GM18951 (cell line): ENCODE measurements at regions of chr18 and their contacts with region 1.

Region 1: DNA sequence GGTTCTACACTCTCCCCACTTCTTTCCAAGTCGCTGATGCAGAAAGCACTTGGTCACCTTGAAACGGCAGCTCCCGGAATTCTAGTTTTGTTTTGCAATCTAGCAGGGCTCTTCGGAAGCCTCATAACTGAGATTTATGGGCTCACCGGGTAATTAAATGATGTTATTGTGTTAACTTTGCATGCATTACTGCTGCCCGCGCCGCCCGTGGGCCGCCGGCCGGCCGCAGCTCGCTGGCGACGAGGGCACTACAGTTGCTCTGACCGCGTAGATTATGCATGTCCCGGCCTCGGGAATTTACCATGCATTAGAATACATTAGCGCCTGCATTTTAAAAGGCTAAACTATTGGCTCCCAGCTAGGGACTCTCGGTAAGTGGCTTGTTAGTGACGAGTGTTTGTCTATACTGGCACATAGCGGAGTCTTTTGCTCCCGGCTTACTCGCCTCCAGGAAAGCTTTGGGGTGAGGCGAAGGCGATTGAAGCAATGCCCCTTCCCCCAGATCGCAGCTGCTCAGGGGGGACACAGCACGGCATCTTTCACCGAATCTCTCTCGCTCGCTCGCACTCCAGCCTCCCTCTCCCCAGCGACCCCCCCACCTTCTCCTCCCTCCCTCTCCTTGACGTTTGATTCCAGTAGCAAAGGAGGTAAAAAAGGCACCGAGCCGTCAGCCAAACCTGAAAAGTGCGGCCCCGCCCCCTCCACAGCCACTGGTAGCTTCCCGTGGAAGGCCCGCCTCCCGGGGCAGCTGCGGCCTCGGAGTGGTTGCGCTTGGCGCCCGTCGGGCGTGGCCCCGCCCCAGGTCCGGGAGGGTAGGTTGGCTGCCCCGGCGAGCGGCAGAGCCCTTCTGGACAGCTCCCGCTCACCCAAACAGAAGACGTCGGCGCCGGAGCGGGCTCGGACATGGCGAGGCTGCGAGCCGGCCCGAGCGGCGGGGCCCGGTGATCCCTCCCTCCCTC is at the start of gene ONECUT2:
- POLR2A ChIP-seq: no peak

Region 2: DNA sequence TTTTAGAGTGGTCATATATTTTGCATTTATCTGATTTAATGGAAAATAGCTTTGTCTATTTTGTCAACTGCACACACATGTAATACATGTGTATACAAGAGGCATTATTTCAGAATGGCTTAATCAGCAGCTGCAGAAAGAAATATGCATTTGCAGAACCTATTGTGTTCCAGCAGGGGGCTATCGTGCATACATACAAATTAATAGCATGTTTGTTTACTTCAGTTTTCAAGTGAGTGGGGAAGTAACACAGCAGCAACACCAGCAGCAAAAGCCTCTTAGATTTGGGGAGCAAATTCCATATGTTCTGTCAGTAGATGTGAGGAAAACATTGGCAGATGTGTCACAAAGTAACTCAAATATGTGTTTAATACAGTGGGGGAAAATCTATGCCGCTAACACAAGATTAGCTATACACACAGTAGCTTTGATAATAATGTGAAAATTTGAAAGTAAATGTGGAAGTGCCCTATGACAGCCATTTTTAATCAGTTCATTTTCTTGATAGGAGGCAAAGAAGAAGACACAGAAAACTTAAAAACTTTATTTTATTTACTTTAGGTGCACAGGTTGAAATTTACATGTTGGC is 565.5 kb before region 1 on chr18:
- in situ Hi-C with region 1: loop called (anchors 25 kb)
- POLR2A ChIP-seq: no peak

Region 3: DNA sequence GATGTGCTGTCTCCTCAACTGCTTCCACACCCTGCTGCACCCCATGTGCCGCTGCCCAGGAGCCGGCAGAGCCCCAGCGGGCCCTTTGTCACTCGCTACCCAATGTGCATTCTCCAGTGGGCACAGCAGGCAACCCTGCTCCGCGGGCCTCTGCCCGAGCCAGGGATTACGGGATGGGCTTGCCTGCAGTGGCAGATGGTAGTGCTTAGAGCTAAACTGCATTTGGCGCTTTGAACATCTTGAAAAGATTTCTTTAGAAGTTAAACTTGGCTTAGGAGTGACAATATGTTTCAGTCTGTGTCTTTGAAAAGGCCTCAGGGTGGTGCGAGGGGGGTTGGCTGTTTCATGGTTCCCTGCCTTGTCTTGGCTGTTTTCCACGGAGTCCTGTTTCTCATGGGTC is 372.0 kb before region 1 on chr18:
- in situ Hi-C with region 1: no loop called
- POLR2A ChIP-seq: no peak